Tibial artery (tissue), 4 donors: ENCODE measurements at regions of chr21 and their contacts with region 1.

Region 1: DNA sequence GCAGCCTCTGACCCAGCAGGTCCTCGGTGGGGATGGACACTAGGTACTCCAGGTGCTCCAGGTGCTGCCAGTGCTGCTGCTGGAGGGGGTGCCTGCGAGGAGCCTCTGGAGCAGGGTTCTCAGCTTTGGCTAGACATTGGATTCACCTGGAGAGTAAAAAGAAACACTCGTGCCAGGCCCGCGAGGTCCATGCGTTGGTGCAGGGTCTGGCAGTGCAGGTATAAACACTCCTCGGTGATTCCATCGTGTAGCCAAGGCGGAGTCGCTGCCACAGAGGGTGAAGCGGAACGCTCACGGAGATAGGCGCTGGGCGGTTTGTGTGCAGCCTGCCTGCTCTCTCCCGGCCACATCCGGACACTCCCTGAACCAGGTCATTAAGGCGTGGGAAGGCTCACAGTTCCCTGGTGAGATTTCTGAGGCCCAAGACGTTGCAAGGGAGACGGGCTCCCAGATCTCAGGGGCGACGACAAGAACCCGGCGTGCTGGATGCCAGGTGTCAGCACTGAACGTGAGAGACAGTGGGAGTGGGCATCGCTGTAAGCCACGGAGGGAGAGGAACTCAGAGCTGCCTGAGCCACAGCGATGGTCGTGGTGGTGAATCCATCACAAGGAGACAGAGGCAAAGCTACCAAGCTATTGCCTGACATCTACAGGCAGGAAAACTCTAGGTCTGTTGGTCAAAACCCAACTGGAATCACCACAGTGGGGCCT is 17.2 kb upstream of the SUMO3 start:
- DNase-seq: peak in 1 of 2 donors; percentile 51
- H3K4me3 ChIP-seq: no peak overlapping the region
- H3K27ac ChIP-seq: no peak overlapping the region
- H3K4me1 ChIP-seq: peaks cover 0 to 6% (median 3%) of the 10 kb centered on the region in 4 donors
- H3K27me3 ChIP-seq: peaks cover 0 to 15% of the 10 kb centered on the region in 2 donors
- CTCF ChIP-seq: no peak

Region 2: GRCh38 chr21:42988236-42988965 is 1846.7 kb before region 1 on chr21:
- intact Hi-C with region 1: loop called (anchors 5 kb)
- DNase-seq: no peak
- H3K4me3 ChIP-seq: no peak overlapping the region
- H3K27ac ChIP-seq: no peak overlapping the region
- H3K4me1 ChIP-seq: peaks cover 0 to 10% (median 0%) of the 10 kb centered on the region in 4 donors
- H3K27me3 ChIP-seq: no peaks in the 10 kb centered on the region
- CTCF ChIP-seq: no peak